Activated CD4-positive, alpha-beta memory T cell treated with anti-CD3 and anti-CD28 coated beads for 36 hours (primary cell): ENCODE measurements at regions of chr1 and their contacts with region 1.

Region 1: DNA sequence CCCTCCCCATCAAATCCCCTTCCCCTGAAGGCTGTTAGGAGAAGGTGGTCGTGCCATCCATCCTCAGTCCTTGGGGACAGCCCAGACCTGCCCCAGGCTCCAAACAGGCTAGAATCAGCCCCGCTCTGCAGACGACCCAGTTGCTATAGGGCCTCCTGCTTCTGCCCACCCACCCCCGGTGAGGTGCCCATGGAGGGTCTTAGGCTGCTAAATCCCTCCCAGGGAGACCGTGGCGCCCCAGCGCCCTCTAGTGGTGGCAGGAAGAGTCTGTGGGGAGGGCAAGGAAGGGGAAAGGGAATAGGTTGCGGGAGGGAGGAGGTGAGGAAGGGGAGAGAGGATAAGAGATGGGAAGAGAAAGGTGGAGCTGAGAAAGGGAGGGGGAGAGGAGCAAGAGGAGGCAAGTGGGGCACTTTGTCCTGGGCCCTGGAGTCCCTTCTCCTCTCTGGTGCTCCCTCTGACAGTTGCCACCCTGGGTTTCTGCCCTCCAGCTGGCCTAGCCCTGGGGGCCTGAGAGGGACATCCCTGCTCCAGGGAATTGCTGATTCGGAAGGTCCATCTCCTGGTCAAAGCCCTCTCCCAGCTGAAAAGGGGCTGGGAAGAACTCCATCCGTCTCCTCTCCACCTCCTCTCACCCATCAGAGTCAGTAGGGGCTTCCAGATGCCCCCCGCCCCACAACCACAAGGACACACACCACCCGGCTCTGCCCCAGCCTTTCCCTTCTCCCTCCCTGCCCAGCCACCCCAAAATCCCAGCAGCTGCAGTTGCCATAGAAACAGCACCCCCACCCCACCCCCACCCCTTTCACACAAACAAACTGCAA is 55.4 kb downstream of the CAMK2N1 start:
- DNase-seq: peak; percentile 60
- H3K4me3 Mint-ChIP-seq: no peak overlapping the region
- H3K27ac Mint-ChIP-seq: no peak overlapping the region
- H3K4me1 Mint-ChIP-seq: peaks cover 8% of the 10 kb centered on the region
- H3K27me3 Mint-ChIP-seq: peaks cover 25% of the 10 kb centered on the region

Region 2: GRCh38 chr1:20080441-20081352 is 349.9 kb before region 1 on chr1:
- CTCF ChIA-PET with region 1: no interaction called
- POLR2A ChIA-PET with region 1: no interaction called
- intact Hi-C with region 1: no loop called
- DNase-seq: peak; percentile 13
- H3K4me3 Mint-ChIP-seq: no peak overlapping the region
- H3K27ac Mint-ChIP-seq: no peak overlapping the region
- H3K4me1 Mint-ChIP-seq: no peaks in the 10 kb centered on the region
- H3K27me3 Mint-ChIP-seq: peaks cover 34% of the 10 kb centered on the region

Region 3: GRCh38 chr1:20376880-20377494 is 53.6 kb before region 1 on chr1:
- CTCF ChIA-PET with region 1: interaction called, 12 read pairs
- POLR2A ChIA-PET with region 1: no interaction called
- intact Hi-C with region 1: loop called (anchors 1 kb)
- DNase-seq: peak; percentile 77
- H3K4me3 Mint-ChIP-seq: no peak overlapping the region
- H3K27ac Mint-ChIP-seq: no peak overlapping the region
- H3K4me1 Mint-ChIP-seq: peaks cover 3% of the 10 kb centered on the region
- H3K27me3 Mint-ChIP-seq: peaks cover 17% of the 10 kb centered on the region

Region 4: GRCh38 chr1:20470194-20470593 is 39.6 kb after region 1 on chr1:
- CTCF ChIA-PET with region 1: no interaction called
- POLR2A ChIA-PET with region 1: no interaction called
- intact Hi-C with region 1: no loop called
- DNase-seq: no peak
- H3K4me3 Mint-ChIP-seq: no peak overlapping the region
- H3K27ac Mint-ChIP-seq: no peak overlapping the region
- H3K4me1 Mint-ChIP-seq: peaks cover 6% of the 10 kb centered on the region
- H3K27me3 Mint-ChIP-seq: peaks cover 39% of the 10 kb centered on the region